CD4-positive, alpha-beta T cell (primary cell): ENCODE measurements at regions of chr5 and their contacts with region 1.

Region 1: GRCh38 chr5:150458819-150459557 is 9.4 kb upstream of the RPS14 start:
- DNase-seq: peak; percentile 78 to 93 (median 87)
- ATAC-seq: peak; percentile 91
- H3K4me3 ChIP-seq: no peak overlapping the region
- H3K4me3 Mint-ChIP-seq: no peak overlapping the region
- H3K27ac ChIP-seq: no peak overlapping the region
- H3K27ac Mint-ChIP-seq: peak overlapping the region; percentile 61
- H3K4me1 ChIP-seq: peaks cover 37% of the 10 kb centered on the region
- H3K4me1 Mint-ChIP-seq: peaks cover 45% of the 10 kb centered on the region
- H3K27me3 ChIP-seq: no peaks in the 10 kb centered on the region
- H3K27me3 Mint-ChIP-seq: no peaks in the 10 kb centered on the region
- CTCF ChIP-seq: peak; percentile 80

Region 2: GRCh38 chr5:150523472-150524350 is 64.7 kb after region 1 on chr5:
- CTCF ChIA-PET with region 1: no interaction called
- POLR2A ChIA-PET with region 1: no interaction called
- intact Hi-C with region 1: loop called (anchors 1 to 2 kb)
- DNase-seq: peak in 6 of 14 experiments; percentile 4 to 65 (median 34)
- ATAC-seq: peak; percentile 39
- H3K4me3 ChIP-seq: no peak overlapping the region
- H3K4me3 Mint-ChIP-seq: no peak overlapping the region
- H3K27ac ChIP-seq: no peak overlapping the region
- H3K27ac Mint-ChIP-seq: no peak overlapping the region
- H3K4me1 ChIP-seq: no peaks in the 10 kb centered on the region
- H3K4me1 Mint-ChIP-seq: no peaks in the 10 kb centered on the region
- H3K27me3 ChIP-seq: no peaks in the 10 kb centered on the region
- H3K27me3 Mint-ChIP-seq: no peaks in the 10 kb centered on the region
- CTCF ChIP-seq: no peak

Region 3: DNA sequence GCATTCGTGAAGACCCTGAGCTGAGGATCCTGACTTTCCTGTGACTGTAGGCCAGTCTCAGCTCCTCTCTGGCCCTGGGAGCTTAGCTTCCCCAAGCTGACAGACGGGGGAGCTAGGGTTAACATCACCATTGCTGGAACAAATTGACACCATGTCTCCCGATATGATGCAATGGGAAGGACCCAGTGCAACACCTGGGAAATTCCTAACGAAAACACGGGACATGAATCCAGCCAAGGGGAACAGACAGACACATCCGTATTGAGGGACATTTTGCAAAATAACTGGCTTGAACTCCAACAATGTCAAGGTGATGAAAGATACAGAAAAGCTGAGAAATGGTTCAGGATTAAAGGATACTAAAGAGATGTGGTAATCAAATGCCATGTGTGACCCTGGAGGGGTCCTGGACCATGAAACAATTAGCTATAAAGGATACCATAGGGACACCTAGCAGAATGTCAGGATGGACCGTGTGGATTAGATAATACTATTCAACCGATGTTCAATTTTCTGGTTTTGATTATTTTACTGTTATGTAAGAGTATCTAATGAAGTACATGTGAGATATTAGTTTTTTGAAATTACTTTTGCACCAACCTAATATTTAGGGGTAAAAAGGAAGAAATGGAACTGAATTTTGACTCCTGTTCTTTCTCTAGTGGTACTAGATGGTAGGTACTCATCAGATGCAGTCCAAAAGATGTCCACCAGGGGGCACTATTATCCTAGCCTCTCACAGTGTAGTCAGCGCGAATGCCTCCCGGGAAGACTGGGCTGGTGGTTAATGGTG is 101.6 kb after region 1 on chr5:
- CTCF ChIA-PET with region 1: no interaction called
- POLR2A ChIA-PET with region 1: no interaction called
- intact Hi-C with region 1: loop called (anchors 5 kb)
- DNase-seq: peak; percentile 58 to 93 (median 82)
- ATAC-seq: peak; percentile 98
- H3K4me3 ChIP-seq: no peak overlapping the region
- H3K4me3 Mint-ChIP-seq: no peak overlapping the region
- H3K27ac ChIP-seq: no peak overlapping the region
- H3K27ac Mint-ChIP-seq: no peak overlapping the region
- H3K4me1 ChIP-seq: no peaks in the 10 kb centered on the region
- H3K4me1 Mint-ChIP-seq: no peaks in the 10 kb centered on the region
- H3K27me3 ChIP-seq: no peaks in the 10 kb centered on the region
- H3K27me3 Mint-ChIP-seq: no peaks in the 10 kb centered on the region
- CTCF ChIP-seq: peak; percentile 88

Region 4: GRCh38 chr5:150700594-150701293 is 241.8 kb after region 1 on chr5 and contains the start of gene RBM22:
- CTCF ChIA-PET with region 1: no interaction called
- POLR2A ChIA-PET with region 1: interaction called, 7 read pairs
- intact Hi-C with region 1: loop called in 1 of 2 experiments (anchors 5 kb)
- DNase-seq: peak; percentile 84 to 96 (median 90)
- ATAC-seq: peak; percentile 89
- H3K4me3 ChIP-seq: peak within 1 kb of the TSS; percentile 83
- H3K4me3 Mint-ChIP-seq: no peak within 1 kb of the TSS
- H3K27ac ChIP-seq: peak within 1 kb of the TSS; percentile 95 to 98
- H3K27ac Mint-ChIP-seq: no peak within 1 kb of the TSS
- H3K4me1 ChIP-seq: peaks cover 6% of the 10 kb centered on the region
- H3K4me1 Mint-ChIP-seq: no peaks in the 10 kb centered on the region
- H3K27me3 ChIP-seq: no peaks in the 10 kb centered on the region
- H3K27me3 Mint-ChIP-seq: no peaks in the 10 kb centered on the region
- CTCF ChIP-seq: peak; percentile 75
- total RNA-seq, gene RBM22: 98.2 to 101 TPM

Region 5: GRCh38 chr5:150778517-150779396 is 319.8 kb after region 1 on chr5 and contains the start of gene SMIM3:
- CTCF ChIA-PET with region 1: interaction called, 3 read pairs
- POLR2A ChIA-PET with region 1: interaction called, 4 read pairs
- intact Hi-C with region 1: loop called (anchors 5 to 10 kb)
- DNase-seq: peak; percentile 53 to 84 (median 68)
- ATAC-seq: peak; percentile 63
- H3K4me3 ChIP-seq: peak within 1 kb of the TSS; percentile 96
- H3K4me3 Mint-ChIP-seq: peak within 1 kb of the TSS; percentile 99
- H3K27ac ChIP-seq: peak within 1 kb of the TSS; percentile 62 to 70
- H3K27ac Mint-ChIP-seq: peak within 1 kb of the TSS; percentile 90
- H3K4me1 ChIP-seq: peaks cover 56% of the 10 kb centered on the region
- H3K4me1 Mint-ChIP-seq: peaks cover 58% of the 10 kb centered on the region
- H3K27me3 ChIP-seq: no peaks in the 10 kb centered on the region
- H3K27me3 Mint-ChIP-seq: no peaks in the 10 kb centered on the region
- CTCF ChIP-seq: peak; percentile 41
- total RNA-seq, gene SMIM3: 2.9 TPM

Region 6: GRCh38 chr5:150987746-150988145 is 528.8 kb after region 1 on chr5:
- CTCF ChIA-PET with region 1: no interaction called
- POLR2A ChIA-PET with region 1: no interaction called
- intact Hi-C with region 1: no loop called
- DNase-seq: no peak
- ATAC-seq: no peak
- H3K4me3 ChIP-seq: no peak overlapping the region
- H3K4me3 Mint-ChIP-seq: no peak overlapping the region
- H3K27ac ChIP-seq: no peak overlapping the region
- H3K27ac Mint-ChIP-seq: no peak overlapping the region
- H3K4me1 ChIP-seq: no peaks in the 10 kb centered on the region
- H3K4me1 Mint-ChIP-seq: no peaks in the 10 kb centered on the region
- H3K27me3 ChIP-seq: no peaks in the 10 kb centered on the region
- H3K27me3 Mint-ChIP-seq: peaks cover 4% of the 10 kb centered on the region
- CTCF ChIP-seq: no peak